ENCODE measurements at regions of chr7 and their contacts with region 1.

Region 1: GRCh38 chr7:123154231-123154860 is 45.4 kb downstream of the SLC13A1 start:
- DNase-seq: peak; percentile 71 to 89
- H3K4me3 ChIP-seq: no peak overlapping the region
- CTCF ChIP-seq: no peak
- POLR2A ChIP-seq: no peak

Region 2: GRCh38 chr7:122225874-122226273 is 928.5 kb before region 1 on chr7:
- intact Hi-C with region 1: loop called (anchors 5 kb)
- DNase-seq: no peak
- H3K4me3 ChIP-seq: no peak overlapping the region
- CTCF ChIP-seq: no peak
- POLR2A ChIP-seq: no peak

Measured in lower leg skin (tissue), 4 donors.